Activated CD4-positive, alpha-beta T cell treated with anti-CD3 and anti-CD28 coated beads for 36 hours (primary cell): ENCODE measurements at regions of chr12 and their contacts with region 1.

Region 1: GRCh38 chr12:51951199-51951842 is at the start of gene ACVR1B:
- DNase-seq: peak; percentile 94
- ATAC-seq: peak; percentile 98
- H3K4me3 Mint-ChIP-seq: peak within 1 kb of the TSS; percentile 90
- H3K27ac Mint-ChIP-seq: peak within 1 kb of the TSS; percentile 76
- H3K4me1 Mint-ChIP-seq: peaks cover 40% of the 10 kb centered on the region
- H3K27me3 Mint-ChIP-seq: peaks cover 10% of the 10 kb centered on the region
- total RNA-seq, gene ACVR1B: 10.1 to 12.7 TPM

Region 2: GRCh38 chr12:51590347-51591019 is 360.8 kb before region 1 on chr12:
- CTCF ChIA-PET with region 1: no interaction called
- POLR2A ChIA-PET with region 1: no interaction called
- intact Hi-C with region 1: loop called in 1 of 2 experiments (anchors 2 kb)
- DNase-seq: peak; percentile 88
- ATAC-seq: peak; percentile 89
- H3K4me3 Mint-ChIP-seq: peak overlapping the region; percentile 76
- H3K27ac Mint-ChIP-seq: peak overlapping the region; percentile 63
- H3K4me1 Mint-ChIP-seq: peaks cover 16% of the 10 kb centered on the region
- H3K27me3 Mint-ChIP-seq: peaks cover 47% of the 10 kb centered on the region

Region 3: DNA sequence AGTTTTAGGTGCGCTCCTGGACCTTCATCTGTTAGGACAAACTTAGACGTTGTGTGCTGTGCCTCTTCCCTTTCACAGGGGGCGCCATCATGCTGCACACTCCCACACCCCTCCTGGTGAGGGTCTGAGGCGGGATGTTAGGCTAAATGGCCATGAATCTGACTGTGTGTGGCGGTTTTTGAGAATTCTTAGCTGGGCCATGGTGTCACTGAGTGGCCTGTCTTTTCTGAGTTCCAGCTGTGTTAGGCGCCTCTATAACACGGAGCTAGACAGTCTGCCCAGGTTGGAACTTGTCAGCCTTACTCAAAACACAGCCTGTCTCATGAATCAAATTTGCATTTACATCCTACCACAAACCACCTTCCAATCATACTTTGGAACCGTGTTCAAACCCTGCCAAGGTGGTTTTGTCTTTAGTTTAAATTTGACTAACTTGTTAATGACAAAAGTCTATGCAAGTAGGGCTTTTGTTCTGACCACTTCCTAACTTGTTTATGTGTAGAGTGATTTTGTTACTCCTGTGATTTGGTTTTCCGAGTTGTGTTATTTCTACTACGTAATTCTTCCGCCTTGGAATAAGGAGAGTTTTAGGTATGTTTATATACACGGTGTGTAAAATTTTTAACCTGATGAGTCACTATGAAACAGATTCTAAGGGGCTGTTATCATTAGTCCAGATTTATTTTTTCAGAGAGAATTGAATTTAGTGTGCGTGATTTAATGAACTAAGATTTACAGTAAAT is 19.8 kb after region 1 on chr12:
- CTCF ChIA-PET with region 1: interaction called, 16 read pairs
- POLR2A ChIA-PET with region 1: interaction called, 8 read pairs
- intact Hi-C with region 1: loop called (anchors 1 to 2 kb)
- DNase-seq: peak; percentile 70
- ATAC-seq: peak; percentile 85
- H3K4me3 Mint-ChIP-seq: peak overlapping the region; percentile 53
- H3K27ac Mint-ChIP-seq: peak overlapping the region; percentile 82
- H3K4me1 Mint-ChIP-seq: peaks cover 64% of the 10 kb centered on the region
- H3K27me3 Mint-ChIP-seq: no peaks in the 10 kb centered on the region

Region 4: GRCh38 chr12:52032804-52033502 is 81.6 kb after region 1 on chr12:
- CTCF ChIA-PET with region 1: no interaction called
- POLR2A ChIA-PET with region 1: no interaction called
- intact Hi-C with region 1: loop called in 1 of 2 experiments (anchors 1 kb)
- DNase-seq: peak; percentile 95
- ATAC-seq: peak; percentile 98
- H3K4me3 Mint-ChIP-seq: peak overlapping the region; percentile 70
- H3K27ac Mint-ChIP-seq: peak overlapping the region; percentile 84
- H3K4me1 Mint-ChIP-seq: peaks cover 42% of the 10 kb centered on the region
- H3K27me3 Mint-ChIP-seq: no peaks in the 10 kb centered on the region